ENCODE measurements at regions of chr6 and their contacts with region 1.

Region 1: GRCh38 chr6:148969603-148970061 is 222.8 kb downstream of the UST start:
- DNase-seq: no peak
- ATAC-seq: no peak
- H3K4me3 ChIP-seq: no peak overlapping the region
- H3K27ac ChIP-seq: no peak overlapping the region
- H3K4me1 ChIP-seq: no peaks in the 10 kb centered on the region
- H3K27me3 ChIP-seq: peaks cover 0 to 7% of the 10 kb centered on the region in 2 donors
- CTCF ChIP-seq: no peak
- POLR2A ChIP-seq: no peak

Region 2: GRCh38 chr6:148578245-148578732 is 391.3 kb before region 1 on chr6:
- intact Hi-C with region 1: loop called in 1 of 2 experiments (anchors 10 kb)
- DNase-seq: peak; percentile 66 to 74 (median 71)
- ATAC-seq: peak; percentile 94 to 100 (median 99)
- H3K4me3 ChIP-seq: no peak overlapping the region
- H3K27ac ChIP-seq: no peak overlapping the region
- H3K4me1 ChIP-seq: no peaks in the 10 kb centered on the region
- H3K27me3 ChIP-seq: no peaks in the 10 kb centered on the region
- CTCF ChIP-seq: peak; percentile 51 to 83 (median 69)
- POLR2A ChIP-seq: no peak